ENCODE measurements at regions of chr5 and their contacts with region 1.

Region 1: GRCh38 chr5:141992349-141992963 is 20.4 kb downstream of the GNPDA1 start:
- DNase-seq: peak; percentile 54
- CTCF ChIP-seq: peak; percentile 70

Region 2: GRCh38 chr5:141976176-141976575 is 16.3 kb before region 1 on chr5:
- CTCF ChIA-PET with region 1: interaction called, 39 read pairs
- POLR2A ChIA-PET with region 1: no interaction called
- DNase-seq: no peak
- CTCF ChIP-seq: no peak

Region 3: GRCh38 chr5:142145106-142145900 is 152.8 kb after region 1 on chr5:
- CTCF ChIA-PET with region 1: interaction called, 41 read pairs
- POLR2A ChIA-PET with region 1: no interaction called
- DNase-seq: peak; percentile 50
- CTCF ChIP-seq: peak; percentile 79